Left lung (tissue), 14 donors: ENCODE measurements at regions of chr6 and their contacts with region 1.

Region 1: DNA sequence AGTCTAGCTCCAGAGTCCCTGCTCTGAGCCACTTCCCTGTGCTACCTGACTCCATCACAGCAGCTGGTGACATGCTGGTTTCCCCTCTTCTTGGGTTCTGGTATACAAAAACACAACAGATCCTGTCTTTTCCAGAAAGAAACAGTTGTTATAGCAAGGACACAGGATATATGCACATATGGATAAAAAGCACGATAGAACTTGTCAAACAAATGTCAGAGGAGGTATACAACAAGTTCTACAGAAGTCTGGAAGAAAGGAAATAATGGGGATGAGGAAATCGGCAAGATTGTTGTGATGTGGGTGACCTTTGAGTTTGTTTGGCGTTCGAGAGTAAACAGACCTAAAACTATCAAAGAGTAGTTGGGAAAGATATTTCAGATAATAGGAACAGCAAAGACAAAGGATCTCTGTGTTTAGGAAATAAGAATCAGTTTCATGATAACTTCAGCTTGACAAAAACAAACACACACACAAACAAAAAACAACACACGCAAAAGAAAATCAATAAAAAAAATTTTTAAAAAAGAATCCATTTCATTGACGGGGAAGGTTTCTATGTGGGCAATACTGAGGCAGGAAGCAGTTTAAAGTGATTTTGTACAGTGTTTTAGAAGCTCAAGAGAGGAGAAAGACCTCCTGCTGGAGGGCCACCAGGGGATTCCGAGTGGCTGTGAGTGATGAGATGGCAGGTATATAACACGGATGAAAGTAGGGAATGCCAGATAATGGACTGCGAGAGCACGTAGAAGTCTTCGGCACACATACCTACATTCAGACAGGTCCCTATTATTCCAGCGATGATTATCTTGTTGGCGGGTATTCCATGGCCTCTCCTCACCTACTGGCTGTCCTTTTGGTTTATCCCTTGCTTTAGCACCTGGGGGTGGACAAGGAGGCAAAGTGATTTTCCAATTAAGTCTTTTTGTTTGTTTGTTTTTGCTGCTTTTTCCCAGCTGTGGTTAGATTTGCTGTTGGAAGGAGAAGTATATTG is 174.9 kb downstream of the HS3ST5 start:
- DNase-seq: no peak
- ATAC-seq: no peak
- H3K4me3 ChIP-seq: no peak overlapping the region
- H3K27ac ChIP-seq: no peak overlapping the region
- H3K4me1 ChIP-seq: no peaks in the 10 kb centered on the region
- H3K27me3 ChIP-seq: no peaks in the 10 kb centered on the region
- CTCF ChIP-seq: no peak

Region 2: GRCh38 chr6:113732384-113732966 is 435.4 kb before region 1 on chr6:
- intact Hi-C with region 1: no loop called
- DNase-seq: peak in 2 of 4 donors; percentile 27 to 30
- ATAC-seq: peak; percentile 31
- H3K4me3 ChIP-seq: no peak overlapping the region
- H3K27ac ChIP-seq: no peak overlapping the region
- H3K4me1 ChIP-seq: peaks cover 0 to 11% of the 10 kb centered on the region in 2 donors
- H3K27me3 ChIP-seq: no peaks in the 10 kb centered on the region
- CTCF ChIP-seq: no peak

Region 3: GRCh38 chr6:114892211-114892610 is 724.3 kb after region 1 on chr6:
- intact Hi-C with region 1: loop called in 1 of 2 experiments (anchors 10 kb)
- DNase-seq: no peak
- ATAC-seq: no peak
- H3K4me3 ChIP-seq: no peak overlapping the region
- H3K27ac ChIP-seq: no peak overlapping the region
- H3K4me1 ChIP-seq: no peaks in the 10 kb centered on the region
- H3K27me3 ChIP-seq: no peaks in the 10 kb centered on the region
- CTCF ChIP-seq: no peak